Activated T-helper 1 cell treated with anti-CD3 and anti-CD28 coated beads, Interleukin-12 subunit alpha, Interleukin-12 subunit beta, Interleukin-2, Interleukin-4 antibody, amounts not matched to agents 30 ng/mL and 10 ng/mL and 1 ng/mL, durations not matched to agents 14 hours and 24 hours and 36 hours (primary cell): ENCODE measurements at regions of chr14 and their contacts with region 1.

Region 1: DNA sequence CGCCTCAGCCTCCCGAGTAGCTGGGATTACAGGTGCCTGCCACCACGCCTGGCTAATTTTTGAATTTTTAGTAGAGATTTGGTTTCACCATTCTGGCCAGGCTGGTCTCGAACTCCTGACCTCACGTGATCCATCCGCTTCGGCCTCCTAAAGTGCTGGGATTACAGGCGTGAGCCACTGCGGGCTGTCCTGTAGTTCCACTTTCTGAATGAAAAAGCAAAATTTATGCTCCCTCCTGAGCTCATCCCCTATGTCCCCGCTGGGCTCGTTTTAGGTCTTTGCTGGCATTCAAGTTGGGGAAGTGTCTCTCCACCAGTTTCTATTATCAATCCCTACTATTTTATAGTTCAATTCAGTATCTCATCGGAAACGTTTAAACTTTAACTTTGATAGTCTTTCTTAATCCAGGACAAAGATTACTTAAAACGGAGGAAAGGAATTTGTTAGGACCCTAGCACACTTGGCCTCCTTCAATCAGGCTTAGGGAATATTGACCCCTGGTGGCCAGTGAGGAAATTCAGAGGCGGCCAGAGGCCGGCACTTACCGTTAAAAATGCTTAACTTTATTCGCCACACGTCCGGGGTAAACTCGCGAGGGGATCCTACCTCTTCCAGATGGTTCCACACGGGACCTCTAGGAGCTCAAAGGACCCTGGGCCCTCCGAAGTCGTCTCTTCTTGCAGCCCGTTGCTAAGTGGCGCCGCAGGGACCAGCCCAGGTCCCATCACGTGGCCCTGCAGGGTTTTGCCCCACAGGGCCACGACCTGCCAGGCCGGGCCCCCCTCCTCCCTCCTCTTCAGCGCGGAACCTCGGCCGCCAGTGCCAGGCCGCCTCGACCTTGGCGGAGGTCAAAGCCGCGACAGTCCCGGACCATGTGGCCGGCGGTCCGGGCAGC is 11.4 kb upstream of the DNAL1 start:
- DNase-seq: peak; percentile 40
- H3K4me3 Mint-ChIP-seq: peak overlapping the region; percentile 53
- H3K27ac Mint-ChIP-seq: no peak overlapping the region
- H3K4me1 Mint-ChIP-seq: peaks cover 6% of the 10 kb centered on the region
- H3K27me3 Mint-ChIP-seq: peaks cover 41% of the 10 kb centered on the region

Region 2: DNA sequence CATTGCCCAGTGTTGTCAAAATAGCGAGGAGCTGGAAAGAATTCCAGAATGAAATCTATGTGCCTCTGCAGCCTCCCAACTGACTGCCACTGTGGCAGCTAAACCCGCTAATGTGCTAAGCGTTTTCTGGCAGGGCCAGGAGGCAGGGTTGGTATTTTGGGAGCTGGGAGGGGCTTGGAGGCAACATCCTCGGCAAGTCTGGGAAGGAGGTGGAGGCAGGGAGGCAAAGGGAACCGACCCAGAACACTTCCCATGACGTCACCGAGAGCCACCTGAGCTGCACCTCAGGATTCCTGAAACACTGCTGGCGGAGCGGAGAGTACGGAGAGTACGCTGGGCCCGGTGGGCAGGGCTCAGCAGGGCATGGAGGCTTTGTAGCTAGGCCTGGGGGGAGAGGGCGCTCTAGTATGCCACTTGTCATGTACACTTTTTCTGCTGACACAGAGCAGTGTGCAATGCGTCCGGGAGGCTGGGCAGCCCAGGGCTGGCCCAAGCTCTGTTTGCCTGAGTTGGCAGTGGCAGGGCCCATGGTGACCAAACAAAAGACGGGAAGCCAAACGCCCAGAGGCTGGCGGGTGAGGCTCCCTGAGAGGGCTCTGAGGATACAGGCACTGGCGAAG is 821.0 kb before region 1 on chr14:
- intact Hi-C with region 1: no loop called
- DNase-seq: no peak
- H3K4me3 Mint-ChIP-seq: no peak overlapping the region
- H3K27ac Mint-ChIP-seq: no peak overlapping the region
- H3K4me1 Mint-ChIP-seq: peaks cover 43% of the 10 kb centered on the region
- H3K27me3 Mint-ChIP-seq: peaks cover 3% of the 10 kb centered on the region

Region 3: GRCh38 chr14:73458151-73458976 is 175.0 kb before region 1 on chr14 and contains the start of gene NUMB:
- intact Hi-C with region 1: no loop called
- DNase-seq: peak; percentile 96
- H3K4me3 Mint-ChIP-seq: peak within 1 kb of the TSS; percentile 98
- H3K27ac Mint-ChIP-seq: peak within 1 kb of the TSS; percentile 98
- H3K4me1 Mint-ChIP-seq: peaks cover 58% of the 10 kb centered on the region
- H3K27me3 Mint-ChIP-seq: no peaks in the 10 kb centered on the region
- total RNA-seq, gene NUMB: 49.6 and 53.4 TPM in 2 replicates

Region 4: DNA sequence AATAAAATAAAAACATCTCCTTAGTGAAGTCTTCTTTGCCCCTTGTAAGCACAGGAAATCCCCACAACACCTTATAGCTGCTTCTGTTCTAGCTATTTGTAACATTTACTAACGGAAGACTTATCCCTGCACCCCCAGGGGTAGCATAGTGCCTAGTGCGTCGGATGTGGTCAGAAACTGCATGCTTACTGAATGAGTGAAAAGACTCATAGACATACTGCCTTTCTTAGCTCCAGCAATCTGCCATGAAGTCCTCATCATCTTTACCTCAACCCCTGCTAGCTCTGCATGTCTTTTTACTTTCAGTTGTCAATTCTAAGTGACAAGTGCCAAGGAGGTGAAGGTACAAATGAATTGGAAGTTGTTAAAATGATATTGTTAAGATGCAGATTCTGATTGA is 129.7 kb before region 1 on chr14:
- intact Hi-C with region 1: loop called (anchors 1 kb)
- DNase-seq: no peak
- H3K4me3 Mint-ChIP-seq: no peak overlapping the region
- H3K27ac Mint-ChIP-seq: no peak overlapping the region
- H3K4me1 Mint-ChIP-seq: no peaks in the 10 kb centered on the region
- H3K27me3 Mint-ChIP-seq: no peaks in the 10 kb centered on the region

Region 5: DNA sequence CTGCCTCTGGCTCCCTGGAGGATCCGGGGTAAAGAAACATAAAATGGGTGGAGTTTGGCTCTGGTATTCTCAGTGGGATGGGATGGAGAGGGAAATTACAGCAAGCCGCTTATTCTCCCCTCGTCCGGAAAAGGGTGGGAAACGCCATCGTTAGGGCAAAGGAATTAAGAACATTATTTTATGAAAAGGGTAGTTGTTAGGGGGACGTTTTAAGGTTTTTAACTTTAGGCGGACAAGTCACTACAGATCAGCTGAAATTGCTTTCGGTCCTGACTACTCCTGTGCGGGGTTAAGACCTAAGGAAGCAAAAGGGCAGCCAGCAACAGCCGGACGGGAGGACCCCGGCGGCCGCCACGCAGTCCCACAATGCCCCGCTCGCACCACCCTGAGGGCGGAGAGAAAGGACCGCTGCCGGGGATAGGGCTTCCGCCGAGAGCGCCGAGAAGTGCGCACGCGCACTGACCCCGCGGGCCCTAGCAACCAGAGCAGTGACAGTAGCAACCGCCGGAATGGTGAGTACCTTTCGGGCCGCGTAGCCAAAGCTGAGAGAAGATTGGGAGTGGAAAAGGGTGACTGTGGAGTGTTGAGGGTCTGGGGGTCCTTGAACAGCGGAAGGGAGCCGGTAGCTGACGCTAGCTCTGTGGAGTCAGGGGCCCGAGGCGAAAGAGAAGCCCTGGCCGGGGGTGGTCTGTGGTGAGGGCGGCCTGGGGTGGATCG is 11.3 kb after region 1 on chr14 and contains the start of gene DNAL1:
- intact Hi-C with region 1: loop called (anchors 1 kb)
- DNase-seq: peak; percentile 92
- H3K4me3 Mint-ChIP-seq: peak within 1 kb of the TSS; percentile 86
- H3K27ac Mint-ChIP-seq: peak within 1 kb of the TSS; percentile 71
- H3K4me1 Mint-ChIP-seq: peaks cover 15% of the 10 kb centered on the region
- H3K27me3 Mint-ChIP-seq: no peaks in the 10 kb centered on the region
- total RNA-seq, gene DNAL1: 5.3 and 8.5 TPM in 2 replicates

Region 6: DNA sequence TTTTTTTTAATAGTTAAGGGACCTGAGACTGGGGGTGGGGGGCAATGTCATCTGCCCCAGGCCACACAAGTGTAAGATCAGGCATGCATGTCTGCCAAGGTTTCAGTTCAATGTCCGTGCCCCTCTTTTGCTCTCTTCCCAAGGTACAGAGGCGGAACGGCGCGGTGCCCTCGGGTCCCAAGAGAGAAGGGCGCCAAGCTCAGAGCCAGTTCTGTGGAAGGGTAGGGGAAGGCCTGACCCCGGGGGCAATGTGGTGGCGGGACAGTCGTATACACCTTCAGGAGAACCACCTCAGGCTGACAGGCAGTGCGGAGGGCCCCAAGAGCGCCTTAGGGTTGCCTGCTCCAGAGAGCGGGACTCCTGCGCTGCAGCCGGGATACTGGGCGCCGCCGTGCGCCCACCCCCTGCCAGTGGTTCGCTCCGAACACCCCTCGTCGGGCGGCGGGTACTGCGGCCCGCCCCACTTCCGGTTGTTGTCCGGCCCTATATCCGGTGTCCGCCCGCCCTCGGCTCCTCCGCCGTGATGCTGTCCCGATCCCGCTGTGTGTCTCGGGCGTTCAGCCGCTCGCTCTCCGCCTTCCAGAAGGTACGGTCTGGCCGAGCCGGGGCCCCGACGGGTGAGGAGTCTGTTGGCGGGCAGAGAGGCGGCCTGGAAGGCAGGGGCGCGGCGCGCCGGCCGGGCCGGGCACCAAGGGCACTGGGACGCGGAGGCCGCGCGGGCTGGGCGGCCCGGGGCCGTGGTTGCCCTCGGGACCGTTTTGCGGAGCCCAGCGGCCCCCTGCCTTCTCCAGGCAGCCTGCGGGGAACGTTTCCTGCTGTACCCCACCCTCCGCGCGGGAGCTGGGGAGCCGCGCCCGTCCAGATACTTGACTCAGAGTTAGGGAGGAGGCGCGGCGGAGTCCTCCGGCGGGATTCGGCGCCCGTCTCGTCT is 1248.3 kb after region 1 on chr14 and contains the start of gene DLST:
- intact Hi-C with region 1: no loop called
- DNase-seq: peak; percentile 84
- H3K4me3 Mint-ChIP-seq: peak within 1 kb of the TSS; percentile 100
- H3K27ac Mint-ChIP-seq: peak within 1 kb of the TSS; percentile 99
- H3K4me1 Mint-ChIP-seq: peaks cover 52% of the 10 kb centered on the region
- H3K27me3 Mint-ChIP-seq: no peaks in the 10 kb centered on the region
- total RNA-seq, gene DLST: 98.9 and 107 TPM in 2 replicates